Vagina (tissue), 2 donors: ENCODE measurements at regions of chr18 and their contacts with region 1.

Region 1: GRCh38 chr18:67710639-67711038 is 194.1 kb upstream of the DSEL start:
- DNase-seq: no peak
- H3K4me3 ChIP-seq: no peak overlapping the region
- H3K27ac ChIP-seq: no peak overlapping the region
- H3K4me1 ChIP-seq: no peaks in the 10 kb centered on the region
- H3K27me3 ChIP-seq: no peaks in the 10 kb centered on the region
- CTCF ChIP-seq: no peak
- POLR2A ChIP-seq: no peak

Region 2: GRCh38 chr18:67639872-67640271 is 70.8 kb before region 1 on chr18:
- intact Hi-C with region 1: loop called (anchors 10 kb)
- DNase-seq: no peak
- H3K4me3 ChIP-seq: no peak overlapping the region
- H3K27ac ChIP-seq: no peak overlapping the region
- H3K4me1 ChIP-seq: no peaks in the 10 kb centered on the region
- H3K27me3 ChIP-seq: no peaks in the 10 kb centered on the region
- CTCF ChIP-seq: no peak
- POLR2A ChIP-seq: no peak